ENCODE measurements at regions of chr10 and their contacts with region 1.

Region 1: GRCh38 chr10:71396084-71396720 is 518 bp upstream of the CDH23 start:
- DNase-seq: peak; percentile 68
- ATAC-seq: peak; percentile 66
- H3K4me3 ChIP-seq: peak overlapping the region in 4 of 5 experiments; percentile 24 to 58 (median 51)
- H3K4me3 Mint-ChIP-seq: peak overlapping the region; percentile 78
- H3K27ac ChIP-seq: no peak overlapping the region
- H3K27ac Mint-ChIP-seq: no peak overlapping the region
- H3K4me1 ChIP-seq: peaks cover 17% of the 10 kb centered on the region in 2 donors
- H3K4me1 Mint-ChIP-seq: peaks cover 11% of the 10 kb centered on the region
- H3K27me3 ChIP-seq: peaks cover 0 to 56% (median 22%) of the 10 kb centered on the region in 4 experiments
- H3K27me3 Mint-ChIP-seq: peaks cover 57% of the 10 kb centered on the region
- CTCF ChIP-seq: no peak

Region 2: DNA sequence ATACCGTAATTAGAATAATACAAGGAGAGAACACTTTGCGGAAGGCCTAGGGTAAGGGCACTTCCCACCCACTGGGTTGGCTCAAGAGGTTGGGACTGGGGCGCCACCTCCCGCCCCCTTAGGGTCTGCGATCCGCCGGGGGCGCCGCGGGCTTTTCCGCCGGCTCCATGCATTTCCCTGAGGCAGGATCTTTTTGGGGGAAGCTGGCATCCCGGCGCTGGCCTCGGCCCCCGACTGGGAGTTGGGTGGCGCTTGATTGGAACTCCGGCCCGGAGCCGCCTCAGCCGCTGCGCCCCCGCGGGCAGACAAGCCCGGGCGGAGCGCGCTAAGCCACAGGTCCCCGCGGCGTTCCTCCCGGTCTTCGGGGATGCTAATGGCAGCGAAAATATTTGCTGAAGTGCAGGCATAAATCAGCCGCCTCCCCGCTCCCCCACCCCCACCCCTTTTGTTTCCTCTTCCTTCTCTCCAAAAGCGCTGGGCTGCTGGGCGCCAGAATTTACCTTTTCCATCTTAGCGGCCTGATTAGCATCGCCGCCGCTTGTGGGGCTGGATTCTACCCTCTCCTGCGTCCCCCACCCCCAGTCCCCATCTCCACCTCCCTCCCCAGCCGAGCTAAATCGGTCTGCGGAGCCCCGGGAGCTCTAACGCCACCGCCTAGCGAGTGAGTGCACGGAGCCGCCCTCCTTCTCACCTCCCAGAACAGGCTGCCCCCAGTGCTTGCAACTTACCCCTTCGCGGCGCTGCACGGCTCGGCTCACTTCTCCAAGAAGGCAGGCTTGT is 178.7 kb before region 1 on chr10:
- CTCF ChIA-PET with region 1: no interaction called
- POLR2A ChIA-PET with region 1: no interaction called
- intact Hi-C with region 1: no loop called
- DNase-seq: no peak
- ATAC-seq: no peak
- H3K4me3 ChIP-seq: peak overlapping the region in 2 of 5 experiments; percentile 15 to 41
- H3K4me3 Mint-ChIP-seq: peak overlapping the region; percentile 53
- H3K27ac ChIP-seq: no peak overlapping the region
- H3K27ac Mint-ChIP-seq: no peak overlapping the region
- H3K4me1 ChIP-seq: peaks cover 13 to 16% of the 10 kb centered on the region in 2 donors
- H3K4me1 Mint-ChIP-seq: peaks cover 13% of the 10 kb centered on the region
- H3K27me3 ChIP-seq: peaks cover 0 to 64% (median 14%) of the 10 kb centered on the region in 4 experiments
- H3K27me3 Mint-ChIP-seq: peaks cover 58% of the 10 kb centered on the region
- CTCF ChIP-seq: no peak

Region 3: GRCh38 chr10:71462062-71462935 is 66.1 kb after region 1 on chr10:
- CTCF ChIA-PET with region 1: no interaction called
- POLR2A ChIA-PET with region 1: no interaction called
- intact Hi-C with region 1: no loop called
- DNase-seq: no peak
- ATAC-seq: no peak
- H3K4me3 ChIP-seq: no peak overlapping the region
- H3K4me3 Mint-ChIP-seq: no peak overlapping the region
- H3K27ac ChIP-seq: no peak overlapping the region
- H3K27ac Mint-ChIP-seq: no peak overlapping the region
- H3K4me1 ChIP-seq: no peaks in the 10 kb centered on the region
- H3K4me1 Mint-ChIP-seq: no peaks in the 10 kb centered on the region
- H3K27me3 ChIP-seq: peaks cover 0 to 3% (median 0%) of the 10 kb centered on the region in 4 experiments
- H3K27me3 Mint-ChIP-seq: peaks cover 6% of the 10 kb centered on the region
- CTCF ChIP-seq: no peak

Region 4: DNA sequence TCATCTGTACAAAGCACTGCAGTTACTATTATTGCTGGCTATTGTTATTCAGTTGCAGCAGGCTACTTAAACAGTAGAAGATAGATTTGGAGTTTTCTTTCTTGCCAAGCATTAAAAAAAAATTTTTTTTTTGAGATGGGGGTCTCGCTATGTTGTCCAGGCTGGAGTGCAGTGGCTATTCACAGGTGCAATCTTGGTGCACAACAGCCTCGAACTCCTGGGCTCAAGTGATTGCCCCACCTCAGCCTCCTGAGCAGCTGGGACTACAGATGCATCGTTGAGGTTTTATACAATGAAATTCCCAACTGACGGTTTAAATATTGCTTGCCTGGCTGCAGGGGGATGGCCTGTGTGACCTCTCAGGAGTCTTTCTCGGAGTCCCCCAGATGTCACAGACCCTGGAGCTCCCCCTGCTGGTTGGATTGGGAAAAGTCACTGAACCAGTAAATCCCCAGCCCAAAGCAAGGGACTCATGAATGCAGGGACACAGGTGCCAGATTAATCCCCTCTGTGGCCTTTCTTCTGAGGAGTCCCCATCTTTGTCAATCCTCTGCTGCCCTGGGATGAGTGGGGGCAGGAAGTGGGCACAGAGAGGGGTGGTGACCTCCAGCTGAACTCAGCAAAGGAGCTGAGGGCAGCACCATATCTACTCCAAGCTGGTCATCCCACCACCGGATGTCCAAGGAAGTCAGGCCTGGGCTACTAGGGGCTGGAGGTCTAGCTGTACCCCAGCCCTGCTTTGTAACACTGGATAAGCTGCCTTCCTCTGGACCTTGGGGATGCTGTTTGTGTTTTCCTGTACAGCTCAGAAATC is 173.8 kb after region 1 on chr10:
- CTCF ChIA-PET with region 1: interaction called, 42 read pairs
- POLR2A ChIA-PET with region 1: no interaction called
- intact Hi-C with region 1: loop called (anchors 5 kb)
- DNase-seq: peak; percentile 77
- ATAC-seq: peak; percentile 57
- H3K4me3 ChIP-seq: no peak overlapping the region
- H3K4me3 Mint-ChIP-seq: no peak overlapping the region
- H3K27ac ChIP-seq: no peak overlapping the region
- H3K27ac Mint-ChIP-seq: no peak overlapping the region
- H3K4me1 ChIP-seq: no peaks in the 10 kb centered on the region
- H3K4me1 Mint-ChIP-seq: no peaks in the 10 kb centered on the region
- H3K27me3 ChIP-seq: no peaks in the 10 kb centered on the region
- H3K27me3 Mint-ChIP-seq: peaks cover 5% of the 10 kb centered on the region
- CTCF ChIP-seq: peak; percentile 86

Measured in B cell (primary cell).